Heart left ventricle (tissue), 16 donors: ENCODE measurements at regions of chr3 and their contacts with region 1.

Region 1: GRCh38 chr3:100159331-100160153 is 45.2 kb upstream of the FILIP1L start:
- DNase-seq: no peak
- ATAC-seq: peak in 1 of 4 donors; percentile 28
- H3K4me3 ChIP-seq: no peak overlapping the region
- H3K27ac ChIP-seq: peak overlapping the region; percentile 10 to 80 (median 66)
- H3K4me1 ChIP-seq: peaks cover 0 to 63% (median 44%) of the 10 kb centered on the region in 12 donors
- H3K27me3 ChIP-seq: no peaks in the 10 kb centered on the region
- CTCF ChIP-seq: no peak
- POLR2A ChIP-seq: no peak

Region 2: DNA sequence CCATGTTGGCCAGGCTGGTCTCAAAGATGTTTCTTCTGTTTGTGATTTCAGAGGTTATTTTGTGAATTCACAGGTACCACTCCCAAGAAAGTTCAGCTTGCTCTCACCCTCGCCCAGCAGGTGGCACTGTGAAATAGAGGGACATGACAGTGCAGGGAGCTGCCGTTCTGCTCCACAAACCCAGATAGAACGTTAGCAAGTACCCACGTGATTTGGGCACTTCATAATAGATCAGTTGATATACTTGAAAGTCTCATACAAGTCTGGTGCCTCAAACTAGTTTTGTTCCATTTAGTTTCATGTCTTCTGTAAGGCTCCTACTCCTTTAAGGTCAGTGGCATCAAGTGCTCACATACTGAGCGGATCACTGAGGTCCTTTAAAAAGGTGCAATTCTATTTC is 90.7 kb before region 1 on chr3:
- intact Hi-C with region 1: loop called in 5 of 10 experiments (anchors 5 to 10 kb)
- DNase-seq: peak; percentile 80 to 87 (median 81)
- ATAC-seq: peak; percentile 73 to 91 (median 86)
- H3K4me3 ChIP-seq: no peak overlapping the region
- H3K27ac ChIP-seq: peak overlapping the region in 4 of 12 donors; percentile 14 to 60 (median 24)
- H3K4me1 ChIP-seq: peaks cover 0 to 42% (median 23%) of the 10 kb centered on the region in 12 donors
- H3K27me3 ChIP-seq: no peaks in the 10 kb centered on the region
- CTCF ChIP-seq: peak; percentile 49 to 88 (median 76)
- POLR2A ChIP-seq: no peak

Region 3: GRCh38 chr3:100103558-100104441 is 55.7 kb before region 1 on chr3:
- intact Hi-C with region 1: loop called in 2 of 10 experiments (anchors 5 kb)
- DNase-seq: no peak
- ATAC-seq: peak in 3 of 4 donors; percentile 15 to 24 (median 20)
- H3K4me3 ChIP-seq: no peak overlapping the region
- H3K27ac ChIP-seq: peak overlapping the region in 11 of 12 donors; percentile 33 to 83 (median 74)
- H3K4me1 ChIP-seq: peaks cover 3 to 77% (median 39%) of the 10 kb centered on the region in 12 donors
- H3K27me3 ChIP-seq: no peaks in the 10 kb centered on the region
- CTCF ChIP-seq: no peak
- POLR2A ChIP-seq: no peak